ENCODE measurements at regions of chr1 and their contacts with region 1.

Region 1: DNA sequence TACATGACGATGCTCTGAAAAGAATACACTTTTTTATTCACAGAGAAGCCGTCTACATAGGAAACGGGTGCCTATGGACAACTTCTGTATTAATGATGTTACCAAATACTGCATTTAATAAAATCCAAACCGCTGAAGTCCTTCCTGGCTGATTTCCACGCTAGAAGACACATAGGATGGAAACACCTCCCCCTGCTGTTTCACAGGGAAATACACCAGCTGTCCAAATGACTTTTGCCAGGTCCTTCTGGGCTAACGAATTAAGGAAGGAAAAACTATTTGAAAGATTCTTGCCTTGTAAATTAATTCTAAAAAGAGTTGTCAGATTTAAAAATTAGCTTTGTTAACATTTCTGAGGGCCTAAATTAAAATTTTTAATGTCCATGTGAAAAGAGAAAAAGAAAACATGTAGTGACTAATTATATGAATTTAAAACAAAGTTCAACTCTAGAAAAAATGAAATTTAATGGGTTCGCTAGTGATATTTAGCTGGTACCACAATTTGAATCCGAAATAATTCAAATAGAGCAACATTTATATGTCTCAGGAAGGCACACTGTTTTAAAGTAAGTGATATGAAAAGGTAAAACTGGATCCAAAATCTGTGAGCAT is 146.0 kb downstream of the RERE start:
- DNase-seq: no peak
- ATAC-seq: 0 out of 3 replicates have a peak, but pooled peaks have one; percentile 24
- H3K4me3 ChIP-seq: no peak overlapping the region
- H3K27ac ChIP-seq: no peak overlapping the region
- H3K4me1 ChIP-seq: peaks cover 31% of the 10 kb centered on the region
- H3K27me3 ChIP-seq: no peaks in the 10 kb centered on the region
- CTCF ChIP-seq: peak; percentile 76 to 80 (median 79)
- EP300 ChIP-seq: no peak
- POLR2A ChIP-seq: no peak
- RAD21 ChIP-seq: peak; percentile 94

Region 2: DNA sequence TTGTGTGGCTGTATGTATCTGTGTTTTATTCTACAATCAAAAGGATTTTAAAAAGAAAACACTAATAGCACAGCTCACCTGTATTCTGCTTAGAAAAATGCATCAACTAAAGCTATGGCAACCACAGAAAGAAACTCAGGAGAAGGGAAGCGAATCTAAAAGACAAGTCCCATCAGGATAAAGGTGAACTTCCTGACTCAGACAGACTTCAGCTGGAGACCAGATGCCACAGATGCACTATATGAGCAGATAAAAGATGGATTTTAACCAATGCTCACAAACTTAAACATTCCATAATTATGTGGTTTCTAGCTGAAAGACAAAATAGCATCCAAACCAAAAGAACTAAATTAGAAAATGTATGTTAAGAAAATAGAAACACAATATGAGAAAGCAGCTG is 85.0 kb before region 1 on chr1:
- CTCF ChIA-PET with region 1: interaction called, 19 read pairs
- POLR2A ChIA-PET with region 1: no interaction called
- RAD21 ChIA-PET with region 1: interaction called, 27 read pairs
- SMC1A ChIA-PET with region 1: interaction called, 12 read pairs
- in situ Hi-C with region 1: no loop called
- intact Hi-C with region 1: no loop called
- DNase-seq: no peak
- ATAC-seq: no peak
- H3K4me3 ChIP-seq: no peak overlapping the region
- H3K27ac ChIP-seq: no peak overlapping the region
- H3K4me1 ChIP-seq: peaks cover 4% of the 10 kb centered on the region; the same call in 1 of the 2 replicates
- H3K27me3 ChIP-seq: no peaks in the 10 kb centered on the region
- CTCF ChIP-seq: no peak
- EP300 ChIP-seq: no peak
- POLR2A ChIP-seq: no peak
- RAD21 ChIP-seq: no peak

Region 3: GRCh38 chr1:8649027-8649426 is 22.4 kb before region 1 on chr1:
- CTCF ChIA-PET with region 1: interaction called, 20 read pairs
- POLR2A ChIA-PET with region 1: interaction called, 22 read pairs
- RAD21 ChIA-PET with region 1: interaction called, 384 read pairs
- SMC1A ChIA-PET with region 1: interaction called, 587 read pairs
- in situ Hi-C with region 1: no loop called
- intact Hi-C with region 1: no loop called
- DNase-seq: no peak
- ATAC-seq: peak; percentile 76
- H3K4me3 ChIP-seq: no peak overlapping the region
- H3K27ac ChIP-seq: 0 out of 2 replicates have a peak overlapping the region, but pooled peaks have one; percentile 39
- H3K4me1 ChIP-seq: peaks cover 67% of the 10 kb centered on the region
- H3K27me3 ChIP-seq: no peaks in the 10 kb centered on the region
- CTCF ChIP-seq: no peak
- EP300 ChIP-seq: peak in 1 of 2 experiments; percentile 84; a peak in 3 of 4 replicates
- POLR2A ChIP-seq: no peak
- RAD21 ChIP-seq: no peak

Region 4: GRCh38 chr1:8698012-8698630 is 26.7 kb after region 1 on chr1:
- CTCF ChIA-PET with region 1: interaction called, 28 read pairs
- POLR2A ChIA-PET with region 1: interaction called, 3 read pairs
- RAD21 ChIA-PET with region 1: interaction called, 21 read pairs
- SMC1A ChIA-PET with region 1: interaction called, 142 read pairs
- in situ Hi-C with region 1: no loop called
- intact Hi-C with region 1: loop called (anchors 2 kb)
- DNase-seq: no peak
- ATAC-seq: no peak
- H3K4me3 ChIP-seq: no peak overlapping the region
- H3K27ac ChIP-seq: no peak overlapping the region
- H3K4me1 ChIP-seq: no peaks in the 10 kb centered on the region; the same call in 1 of the 2 replicates
- H3K27me3 ChIP-seq: no peaks in the 10 kb centered on the region
- CTCF ChIP-seq: no peak
- EP300 ChIP-seq: no peak
- POLR2A ChIP-seq: no peak
- RAD21 ChIP-seq: no peak

Region 5: DNA sequence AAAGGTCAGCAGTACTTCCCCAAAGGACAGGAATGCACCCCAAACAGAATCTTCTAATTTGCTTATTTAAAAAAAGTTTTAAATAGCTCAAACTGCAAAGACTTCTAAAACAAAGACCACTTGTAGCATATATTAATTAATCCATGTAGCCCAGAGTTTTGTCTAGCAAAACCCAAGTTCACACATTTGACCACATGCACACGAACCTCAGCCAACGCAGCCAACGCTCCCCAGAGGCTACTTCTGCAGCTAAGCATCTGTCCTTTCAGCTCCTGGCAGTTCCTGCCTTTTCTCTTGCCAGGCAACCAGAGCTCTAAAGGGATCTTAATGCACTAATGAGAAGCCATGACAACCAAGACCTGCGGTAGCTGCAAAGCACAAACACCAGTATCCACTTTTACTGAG is 56.4 kb after region 1 on chr1:
- CTCF ChIA-PET with region 1: interaction called, 74 read pairs
- POLR2A ChIA-PET with region 1: interaction called, 6 read pairs
- RAD21 ChIA-PET with region 1: interaction called, 33 read pairs
- SMC1A ChIA-PET with region 1: interaction called, 123 read pairs
- in situ Hi-C with region 1: no loop called
- intact Hi-C with region 1: loop called (anchors 2 kb)
- DNase-seq: no peak
- ATAC-seq: peak; percentile 73
- H3K4me3 ChIP-seq: no peak overlapping the region
- H3K27ac ChIP-seq: no peak overlapping the region
- H3K4me1 ChIP-seq: peaks cover 25% of the 10 kb centered on the region
- H3K27me3 ChIP-seq: no peaks in the 10 kb centered on the region
- CTCF ChIP-seq: no peak
- EP300 ChIP-seq: no peak
- POLR2A ChIP-seq: no peak
- RAD21 ChIP-seq: no peak